ENCODE measurements at regions of chr4 and their contacts with region 1.

Region 1: DNA sequence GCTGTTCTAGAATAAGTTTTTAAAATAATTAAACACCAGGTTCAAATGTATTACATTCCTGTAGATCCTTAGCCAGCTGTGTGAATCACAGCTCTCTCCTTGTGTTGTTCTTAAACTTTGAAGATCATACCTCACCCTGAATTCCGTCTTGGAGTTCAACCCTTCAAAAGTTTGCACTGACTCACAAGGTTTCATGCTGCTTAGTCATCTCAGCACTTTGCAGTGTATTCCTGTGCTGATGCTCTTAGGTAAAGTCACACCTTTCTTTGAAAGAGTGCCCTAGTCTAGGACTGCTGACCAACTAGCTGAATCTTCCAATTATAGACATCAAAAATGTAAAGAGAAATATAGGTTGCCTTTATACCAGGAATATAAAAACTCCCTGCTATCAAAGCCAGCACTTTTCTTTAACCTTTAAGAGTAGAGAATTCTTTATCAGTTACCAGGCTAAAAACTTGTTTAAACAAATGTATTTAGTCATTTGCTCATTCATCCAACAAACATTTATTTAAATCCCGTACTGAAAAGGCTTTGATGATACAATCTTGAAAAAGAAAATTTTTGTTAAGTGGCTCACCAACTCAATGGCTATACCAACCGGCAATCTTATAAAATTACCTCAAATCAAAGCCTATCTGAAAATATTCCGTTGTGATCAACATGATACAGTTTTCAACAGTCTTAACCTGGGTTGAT is 169.7 kb downstream of the RAP1GDS1 start:
- DNase-seq: no peak
- H3K4me3 ChIP-seq: no peak overlapping the region
- H3K27ac ChIP-seq: no peak overlapping the region
- H3K4me1 ChIP-seq: no peaks in the 10 kb centered on the region
- H3K27me3 ChIP-seq: no peaks in the 10 kb centered on the region
- CTCF ChIP-seq: no peak
- EP300 ChIP-seq: no peak
- POLR2A ChIP-seq: no peak

Region 2: GRCh38 chr4:97073194-97073593 is 1357.7 kb before region 1 on chr4:
- in situ Hi-C with region 1: no loop called
- intact Hi-C with region 1: loop called (anchors 5 kb)
- DNase-seq: no peak
- H3K4me3 ChIP-seq: no peak overlapping the region
- H3K27ac ChIP-seq: no peak overlapping the region
- H3K4me1 ChIP-seq: no peaks in the 10 kb centered on the region
- H3K27me3 ChIP-seq: no peaks in the 10 kb centered on the region
- CTCF ChIP-seq: no peak
- EP300 ChIP-seq: no peak
- POLR2A ChIP-seq: no peak

Region 3: GRCh38 chr4:98627531-98628257 is 196.8 kb after region 1 on chr4:
- in situ Hi-C with region 1: no loop called
- intact Hi-C with region 1: no loop called
- DNase-seq: no peak
- H3K4me3 ChIP-seq: no peak overlapping the region
- H3K27ac ChIP-seq: peak overlapping the region in 1 of 4 donors; percentile 32
- H3K4me1 ChIP-seq: peaks cover 0 to 13% (median 7%) of the 10 kb centered on the region in 4 donors
- H3K27me3 ChIP-seq: no peaks in the 10 kb centered on the region
- CTCF ChIP-seq: no peak
- EP300 ChIP-seq: no peak
- POLR2A ChIP-seq: no peak

Region 4: GRCh38 chr4:99696801-99697200 is 1265.9 kb after region 1 on chr4:
- in situ Hi-C with region 1: no loop called
- intact Hi-C with region 1: no loop called
- DNase-seq: no peak
- H3K4me3 ChIP-seq: no peak overlapping the region
- H3K27ac ChIP-seq: no peak overlapping the region
- H3K4me1 ChIP-seq: no peaks in the 10 kb centered on the region
- H3K27me3 ChIP-seq: no peaks in the 10 kb centered on the region
- CTCF ChIP-seq: no peak
- EP300 ChIP-seq: no peak
- POLR2A ChIP-seq: no peak